MCF 10A (cell line): ENCODE measurements at regions of chr10 and their contacts with region 1.

Region 1: DNA sequence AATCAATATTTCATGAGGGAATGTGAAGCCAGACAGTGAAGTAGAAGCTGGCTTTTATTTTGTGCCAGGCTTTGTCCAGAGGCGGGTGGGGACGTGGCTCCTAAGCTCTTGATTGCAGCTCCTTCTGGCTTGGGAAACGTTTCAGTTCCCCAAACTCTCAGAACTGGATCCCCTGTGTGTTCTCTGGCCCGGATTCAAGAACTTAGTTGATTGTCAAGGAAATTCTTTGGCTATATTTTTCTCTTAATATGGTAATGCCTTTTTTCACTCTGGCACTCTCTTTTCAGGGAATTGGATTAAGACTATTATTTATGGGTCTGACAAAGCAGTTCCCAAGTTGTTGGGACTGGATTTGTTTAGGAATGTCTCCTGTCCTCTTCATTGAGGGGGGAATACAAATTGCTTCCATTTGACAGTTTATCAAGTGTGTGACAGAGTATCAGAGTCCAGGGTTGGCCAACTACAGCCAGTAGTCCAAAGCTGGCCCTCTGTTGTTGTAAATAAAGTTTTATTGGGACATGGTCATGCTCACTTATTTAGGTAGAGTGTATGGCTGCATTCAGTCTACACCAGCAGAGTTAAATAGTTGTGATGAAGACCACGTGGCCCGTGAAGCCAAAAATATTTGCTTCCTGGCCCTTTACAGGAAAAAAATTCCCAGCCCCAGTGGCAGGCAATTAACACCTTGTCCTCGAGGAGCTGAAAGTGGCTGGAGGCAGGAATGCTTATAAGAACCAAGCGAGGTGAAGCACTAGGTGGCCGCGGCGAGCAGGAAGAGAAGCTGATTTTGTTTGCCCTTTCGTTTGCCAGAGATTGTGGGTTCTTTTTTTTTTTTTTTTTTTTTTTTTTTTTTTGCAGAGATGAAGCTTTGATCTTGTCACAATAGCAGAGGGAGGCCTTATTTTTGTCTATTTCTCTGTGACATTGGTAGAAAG is 34.3 kb downstream of the HTRA1 start:
- DNase-seq: peak; percentile 77
- H3K4me3 Mint-ChIP-seq: peak overlapping the region; percentile 60
- H3K27ac Mint-ChIP-seq: peak overlapping the region; percentile 92
- H3K4me1 Mint-ChIP-seq: peaks cover 71% of the 10 kb centered on the region
- H3K27me3 Mint-ChIP-seq: no peaks in the 10 kb centered on the region
- CTCF ChIP-seq: no peak

Region 2: GRCh38 chr10:122461367-122461728 is 34.3 kb before region 1 on chr10 and contains the start of gene HTRA1:
- CTCF ChIA-PET with region 1: interaction called, 39 read pairs
- POLR2A ChIA-PET with region 1: interaction called, 291 read pairs
- intact Hi-C with region 1: no loop called
- DNase-seq: peak; percentile 78
- H3K4me3 Mint-ChIP-seq: peak within 1 kb of the TSS; percentile 99
- H3K27ac Mint-ChIP-seq: no peak within 1 kb of the TSS
- H3K4me1 Mint-ChIP-seq: peaks cover 34% of the 10 kb centered on the region
- H3K27me3 Mint-ChIP-seq: no peaks in the 10 kb centered on the region
- CTCF ChIP-seq: no peak
- total RNA-seq, gene HTRA1: 157 and 175 TPM in 2 replicates

Region 3: DNA sequence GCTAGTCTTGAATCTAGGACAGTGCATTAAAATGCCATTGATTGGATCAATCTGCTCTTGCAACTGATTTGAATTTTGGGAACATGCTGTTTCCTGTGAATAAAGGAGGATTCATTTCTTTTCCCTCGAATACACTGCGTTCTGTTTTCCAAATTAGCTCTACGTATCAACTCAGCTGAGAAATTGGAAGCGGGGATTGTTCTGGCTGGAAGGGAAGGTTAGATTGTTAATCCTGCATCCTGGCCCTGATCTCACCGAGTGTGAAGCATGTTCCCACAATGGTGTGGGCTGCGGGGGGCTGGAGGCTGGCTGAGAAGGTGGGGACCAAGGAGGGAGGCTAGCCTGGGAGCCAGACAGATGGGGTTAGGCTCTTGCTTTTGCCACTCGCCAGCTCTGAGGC is 16.7 kb before region 1 on chr10:
- CTCF ChIA-PET with region 1: interaction called, 4 read pairs
- POLR2A ChIA-PET with region 1: interaction called, 291 read pairs
- intact Hi-C with region 1: no loop called
- DNase-seq: no peak
- H3K4me3 Mint-ChIP-seq: no peak overlapping the region
- H3K27ac Mint-ChIP-seq: no peak overlapping the region
- H3K4me1 Mint-ChIP-seq: peaks cover 21% of the 10 kb centered on the region
- H3K27me3 Mint-ChIP-seq: no peaks in the 10 kb centered on the region
- CTCF ChIP-seq: no peak

Region 4: DNA sequence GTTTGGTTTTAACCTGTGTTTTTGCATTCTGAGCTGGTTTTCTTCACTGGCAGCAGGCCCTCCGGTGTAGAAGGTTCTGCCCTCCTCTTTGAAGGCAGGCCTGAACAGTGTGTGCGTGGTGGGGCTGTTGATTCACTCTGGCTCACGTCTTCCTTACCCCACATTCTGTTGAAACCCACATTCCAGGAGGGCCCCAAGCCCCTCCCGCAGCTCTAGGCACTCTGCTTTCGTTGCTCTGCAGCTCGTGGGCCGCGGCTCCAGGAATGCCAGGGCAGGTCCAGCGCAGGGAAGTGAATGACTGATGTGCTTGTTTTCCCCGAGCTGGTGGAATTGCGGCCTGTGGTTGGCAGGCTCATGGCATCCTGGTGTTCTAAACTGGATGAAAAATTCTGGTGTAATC is 14.7 kb after region 1 on chr10:
- CTCF ChIA-PET with region 1: interaction called, 4 read pairs
- POLR2A ChIA-PET with region 1: interaction called, 60 read pairs
- intact Hi-C with region 1: no loop called
- DNase-seq: peak; percentile 88
- H3K4me3 Mint-ChIP-seq: peak overlapping the region; percentile 24
- H3K27ac Mint-ChIP-seq: peak overlapping the region; percentile 87
- H3K4me1 Mint-ChIP-seq: peaks cover 19% of the 10 kb centered on the region
- H3K27me3 Mint-ChIP-seq: no peaks in the 10 kb centered on the region
- CTCF ChIP-seq: no peak

Region 5: GRCh38 chr10:122557516-122557915 is 61.8 kb after region 1 on chr10:
- CTCF ChIA-PET with region 1: no interaction called
- POLR2A ChIA-PET with region 1: no interaction called
- intact Hi-C with region 1: no loop called
- DNase-seq: peak; percentile 36
- H3K4me3 Mint-ChIP-seq: no peak overlapping the region
- H3K27ac Mint-ChIP-seq: no peak overlapping the region
- H3K4me1 Mint-ChIP-seq: peaks cover 27% of the 10 kb centered on the region
- H3K27me3 Mint-ChIP-seq: no peaks in the 10 kb centered on the region
- CTCF ChIP-seq: no peak